Sigmoid colon (tissue), 7 donors: ENCODE measurements at regions of chr6 and their contacts with region 1.

Region 1: DNA sequence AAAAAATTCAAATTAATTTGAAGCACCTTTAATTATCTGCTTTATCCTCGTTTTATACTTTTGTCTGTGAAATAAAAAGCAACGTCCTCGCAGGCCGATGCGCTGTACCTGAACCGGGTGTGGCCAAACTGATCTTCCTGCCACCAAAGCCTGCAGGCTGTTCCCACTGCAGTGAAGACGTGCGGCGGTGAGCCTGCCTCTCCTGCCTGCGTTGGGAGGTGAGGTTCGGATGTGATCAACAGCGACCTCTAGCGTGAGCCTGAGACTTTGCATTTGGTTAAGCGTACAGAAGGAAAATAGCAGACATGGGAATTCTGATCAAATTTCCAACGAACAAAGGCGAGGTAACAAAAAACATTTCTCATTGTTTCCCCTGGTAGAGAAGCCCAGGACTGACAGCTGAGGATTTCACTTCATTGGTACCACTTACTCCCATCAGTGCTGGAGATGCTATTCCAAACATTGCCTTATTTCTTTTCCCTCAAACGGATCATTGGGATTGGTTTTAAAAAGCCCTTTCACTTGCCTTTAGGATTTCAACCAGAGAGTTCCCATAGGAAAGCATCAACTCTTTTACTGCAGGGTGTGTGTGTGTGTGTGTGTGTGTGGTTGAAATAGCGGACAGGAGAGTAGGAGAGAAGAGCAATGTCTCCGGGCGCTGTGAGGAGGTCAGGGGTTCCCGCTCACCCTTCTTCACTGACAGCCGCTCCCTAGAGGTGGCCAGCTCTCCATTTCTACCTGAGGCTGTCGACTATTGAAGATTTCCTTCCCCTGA is 56.6 kb upstream of the CCN6 start:
- DNase-seq: peak; percentile 93
- H3K4me3 ChIP-seq: peak overlapping the region in 1 of 4 donors; percentile 1
- H3K27ac ChIP-seq: peak overlapping the region in 3 of 4 donors; percentile 19 to 55 (median 35)
- H3K4me1 ChIP-seq: peaks cover 0 to 10% (median 0%) of the 10 kb centered on the region in 4 donors
- H3K27me3 ChIP-seq: no peaks in the 10 kb centered on the region
- CTCF ChIP-seq: peak; percentile 83 to 94 (median 86)
- EP300 ChIP-seq: no peak
- POLR2A ChIP-seq: no peak

Region 2: DNA sequence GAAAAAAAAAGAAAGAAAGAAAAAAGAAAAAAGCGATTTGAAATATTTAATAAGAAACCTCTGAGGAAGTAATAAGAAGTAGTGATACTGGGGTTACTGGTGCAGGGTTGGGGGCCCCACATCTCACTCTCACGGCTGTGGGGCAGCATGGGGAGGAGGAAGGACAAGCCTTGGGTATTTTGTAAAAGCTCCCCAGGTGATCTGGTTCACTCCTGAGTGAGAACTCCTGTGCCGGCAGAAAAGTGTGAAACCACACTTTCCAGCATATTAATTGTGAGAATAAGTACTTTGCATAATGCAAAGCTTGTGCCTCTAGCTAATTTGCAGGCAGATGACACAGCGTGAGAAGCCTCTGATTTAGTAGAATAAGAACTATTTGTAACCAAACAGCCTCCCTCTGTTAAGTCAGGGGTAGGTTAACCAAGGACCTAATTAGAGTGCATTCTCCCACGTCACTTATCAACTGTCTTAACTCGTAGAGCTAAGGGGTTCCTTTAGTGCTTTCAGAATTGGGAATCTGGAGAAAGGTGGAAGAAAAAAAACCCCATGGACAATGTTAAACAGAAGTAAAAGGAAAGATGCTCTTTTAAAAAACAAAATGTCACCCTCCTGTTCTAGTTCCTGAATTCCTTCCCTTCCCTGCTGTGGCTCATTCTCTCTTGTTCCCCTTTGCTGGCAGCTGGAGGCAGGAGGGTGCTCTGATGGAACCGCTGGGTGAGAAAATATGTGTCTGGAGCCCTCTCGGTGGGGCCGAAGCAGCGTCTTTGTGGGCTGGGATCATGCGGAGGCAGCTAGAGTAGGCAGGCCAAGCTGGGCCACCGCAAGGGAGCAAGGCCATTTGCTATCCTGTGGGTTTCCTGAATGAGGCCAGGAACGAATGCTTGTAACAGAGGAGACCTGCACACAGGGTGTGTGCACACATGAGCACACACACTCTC is 232.8 kb before region 1 on chr6:
- intact Hi-C with region 1: loop called (anchors 5 kb)
- DNase-seq: no peak
- H3K4me3 ChIP-seq: no peak overlapping the region
- H3K27ac ChIP-seq: peak overlapping the region in 3 of 4 donors; percentile 10 to 23 (median 14)
- H3K4me1 ChIP-seq: peaks cover 0 to 52% (median 39%) of the 10 kb centered on the region in 4 donors
- H3K27me3 ChIP-seq: no peaks in the 10 kb centered on the region
- CTCF ChIP-seq: no peak
- EP300 ChIP-seq: no peak
- POLR2A ChIP-seq: no peak

Region 3: DNA sequence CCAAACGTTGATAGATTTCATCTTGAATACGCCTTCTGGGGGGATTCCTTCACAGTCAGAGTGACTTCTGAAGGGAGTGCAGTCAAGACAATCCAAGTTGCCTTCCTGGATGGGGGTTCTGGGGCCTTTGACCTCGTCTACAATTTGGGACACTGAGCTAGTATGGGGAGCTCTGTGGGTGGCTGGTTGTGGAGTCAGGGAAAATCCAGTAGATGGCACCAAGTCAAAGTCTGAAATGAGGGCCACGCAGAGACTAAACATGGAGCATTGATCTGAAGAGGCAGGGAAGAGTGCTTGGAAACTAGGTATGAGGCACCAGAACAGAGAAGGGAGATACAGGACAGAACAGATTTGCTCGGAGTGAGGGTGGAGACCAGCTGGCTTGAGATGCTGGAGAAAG is 13.1 kb after region 1 on chr6:
- intact Hi-C with region 1: no loop called
- DNase-seq: no peak
- H3K4me3 ChIP-seq: no peak overlapping the region
- H3K27ac ChIP-seq: no peak overlapping the region
- H3K4me1 ChIP-seq: peaks cover 0 to 44% (median 30%) of the 10 kb centered on the region in 4 donors
- H3K27me3 ChIP-seq: no peaks in the 10 kb centered on the region
- CTCF ChIP-seq: no peak
- EP300 ChIP-seq: no peak
- POLR2A ChIP-seq: no peak

Region 4: DNA sequence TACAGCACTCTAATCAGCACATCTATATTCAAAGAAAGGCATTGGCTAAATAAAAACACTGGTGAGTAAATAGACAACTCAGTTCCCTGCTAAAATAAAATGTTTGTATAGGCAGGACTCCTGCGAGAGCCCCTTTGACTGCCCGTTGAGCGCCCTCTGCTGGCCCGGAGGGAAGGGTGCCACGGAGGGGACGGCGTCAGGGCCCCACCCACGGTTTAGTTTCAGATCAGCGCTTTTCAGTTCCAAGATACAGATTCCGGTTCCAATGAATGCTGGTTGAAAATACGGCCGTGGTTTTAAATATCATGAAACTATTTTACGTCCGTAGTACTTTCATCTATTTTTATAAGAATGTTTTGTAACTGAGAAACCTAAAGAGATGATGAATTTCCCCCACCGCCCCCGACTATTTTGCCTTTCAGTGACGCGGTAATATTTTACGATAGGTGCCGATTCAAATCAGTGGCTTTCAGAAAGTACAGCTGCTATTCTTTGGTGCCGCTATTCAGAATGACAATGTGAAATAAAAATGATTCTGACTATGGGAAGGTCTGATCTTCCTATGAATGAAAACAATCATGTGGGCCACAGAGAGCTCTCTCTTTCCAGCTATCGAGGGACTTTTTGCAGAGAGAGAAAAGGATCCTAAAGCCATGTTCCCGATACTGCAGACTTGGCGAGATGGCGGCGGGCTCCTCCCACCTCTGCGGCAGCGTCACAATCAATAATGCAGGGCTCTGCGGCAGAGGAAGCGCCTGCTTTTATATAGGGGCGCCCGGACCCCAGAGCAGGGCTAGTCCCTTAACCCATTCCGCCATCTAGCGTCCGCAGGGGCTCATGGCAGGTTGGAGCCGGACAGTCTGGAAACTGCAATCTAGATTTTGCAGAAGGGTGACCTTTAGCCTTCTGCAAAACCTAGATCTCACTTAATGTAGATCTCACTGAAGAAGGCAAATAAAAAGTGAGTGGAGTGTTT is 46.1 kb after region 1 on chr6:
- intact Hi-C with region 1: loop called (anchors 1 kb)
- DNase-seq: peak; percentile 92
- H3K4me3 ChIP-seq: peak overlapping the region; percentile 32 to 61 (median 56)
- H3K27ac ChIP-seq: peak overlapping the region; percentile 77 to 84 (median 80)
- H3K4me1 ChIP-seq: peaks cover 0 to 35% (median 25%) of the 10 kb centered on the region in 4 donors
- H3K27me3 ChIP-seq: no peaks in the 10 kb centered on the region
- CTCF ChIP-seq: peak; percentile 86 to 94 (median 94)
- EP300 ChIP-seq: no peak
- POLR2A ChIP-seq: no peak